Aorta (tissue), 5 donors: ENCODE measurements at regions of chr2 and their contacts with region 1.

Region 1: GRCh38 chr2:222613715-222614331 is 42.1 kb downstream of the FARSB start:
- DNase-seq: no peak
- ATAC-seq: peak; percentile 67
- H3K4me3 ChIP-seq: no peak overlapping the region
- H3K27ac ChIP-seq: no peak overlapping the region
- H3K4me1 ChIP-seq: peaks cover 0 to 4% of the 10 kb centered on the region in 2 donors
- H3K27me3 ChIP-seq: no peaks in the 10 kb centered on the region

Region 2: DNA sequence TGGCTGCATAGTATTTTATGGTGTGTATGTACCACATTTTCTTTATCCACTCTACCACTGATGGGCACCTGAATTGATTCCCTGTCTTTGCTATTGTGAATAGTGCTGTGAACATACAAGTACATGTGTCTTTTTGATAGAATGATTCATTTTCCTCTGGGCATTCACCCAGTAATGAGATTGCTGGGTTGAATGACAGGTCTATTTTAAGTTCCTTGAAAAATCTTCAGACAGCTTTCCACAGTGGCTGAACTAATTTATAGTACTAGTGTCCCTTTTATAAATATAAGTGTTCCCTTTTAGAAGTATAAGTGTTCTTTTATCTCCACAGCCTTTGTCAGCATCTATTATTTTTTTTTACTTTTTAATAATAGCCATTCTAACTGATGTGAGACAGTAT is 737.8 kb before region 1 on chr2:
- intact Hi-C with region 1: no loop called
- DNase-seq: no peak
- ATAC-seq: no peak
- H3K4me3 ChIP-seq: no peak overlapping the region
- H3K27ac ChIP-seq: no peak overlapping the region
- H3K4me1 ChIP-seq: no peaks in the 10 kb centered on the region
- H3K27me3 ChIP-seq: no peaks in the 10 kb centered on the region

Region 3: DNA sequence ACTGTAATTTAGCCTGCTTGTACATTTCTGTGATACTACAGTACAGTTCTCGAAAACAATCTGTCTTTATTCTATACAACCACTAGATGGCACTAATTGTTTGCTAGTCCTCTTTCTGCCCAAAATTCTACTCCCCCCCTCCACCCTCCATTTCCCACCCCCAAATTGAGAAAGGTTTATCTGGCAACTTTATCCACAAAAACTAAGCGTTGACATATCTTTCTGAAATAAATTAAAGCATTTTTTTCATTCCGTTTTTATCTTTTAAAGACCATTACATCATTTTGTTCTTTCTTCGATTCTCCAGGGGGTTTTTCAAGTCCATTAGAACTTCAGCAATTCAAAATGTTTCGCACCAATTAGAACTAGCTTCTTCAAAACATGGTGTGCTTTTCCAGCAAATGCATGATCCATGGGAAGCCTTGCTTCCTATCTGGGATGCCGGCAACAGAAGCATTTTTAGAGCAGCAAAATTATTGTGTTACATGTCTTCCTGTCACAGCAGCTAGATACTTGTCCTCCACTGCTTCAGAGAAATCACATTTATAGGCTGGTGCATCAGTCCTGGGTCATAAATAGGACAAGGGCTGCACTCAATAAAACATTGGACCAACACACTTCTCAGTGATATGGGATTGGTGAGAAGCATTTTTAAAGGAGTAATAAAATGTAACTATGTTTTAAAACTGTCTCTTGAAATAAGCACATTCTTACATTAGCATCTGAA is 556.3 kb before region 1 on chr2:
- intact Hi-C with region 1: loop called in 1 of 2 experiments (anchors 5 kb)
- DNase-seq: no peak
- ATAC-seq: peak; percentile 76
- H3K4me3 ChIP-seq: no peak overlapping the region
- H3K27ac ChIP-seq: no peak overlapping the region
- H3K4me1 ChIP-seq: no peaks in the 10 kb centered on the region
- H3K27me3 ChIP-seq: no peaks in the 10 kb centered on the region

Region 4: GRCh38 chr2:222561817-222562645 is 51.8 kb before region 1 on chr2:
- intact Hi-C with region 1: no loop called
- DNase-seq: no peak
- ATAC-seq: no peak
- H3K4me3 ChIP-seq: no peak overlapping the region
- H3K27ac ChIP-seq: no peak overlapping the region
- H3K4me1 ChIP-seq: no peaks in the 10 kb centered on the region
- H3K27me3 ChIP-seq: no peaks in the 10 kb centered on the region

Region 5: DNA sequence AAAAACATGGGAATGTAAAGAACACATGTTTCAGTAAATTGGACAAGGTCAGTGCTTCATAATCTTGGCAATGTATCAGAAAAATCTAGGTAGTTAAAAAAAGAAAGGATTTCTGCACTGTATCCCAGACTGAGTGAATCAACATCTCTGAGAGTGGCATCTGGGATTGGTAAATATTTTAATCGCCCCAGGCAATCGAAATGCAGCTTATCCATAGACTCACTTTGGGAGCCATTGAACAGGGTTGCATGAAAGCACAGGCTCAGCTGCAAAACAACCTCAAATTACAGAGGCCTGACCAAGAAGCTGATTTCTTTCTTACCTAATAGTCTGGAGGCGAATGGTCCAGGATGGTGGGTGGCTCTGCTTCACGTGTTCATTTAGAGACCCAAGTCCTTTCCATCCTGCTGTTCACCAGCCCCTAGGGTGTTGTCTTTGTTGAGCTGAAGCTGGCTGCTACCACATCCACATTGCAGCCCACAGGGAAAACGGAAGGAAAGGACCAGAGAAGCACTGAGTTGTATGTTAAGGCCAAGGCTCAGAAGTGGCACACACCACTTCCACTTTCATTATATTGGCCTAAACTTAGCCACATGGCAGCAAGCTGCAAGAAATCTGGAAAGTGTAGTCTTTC is 116.7 kb after region 1 on chr2:
- intact Hi-C with region 1: no loop called
- DNase-seq: no peak
- ATAC-seq: peak; percentile 28
- H3K4me3 ChIP-seq: no peak overlapping the region
- H3K27ac ChIP-seq: peak overlapping the region; percentile 61 to 93
- H3K4me1 ChIP-seq: peaks cover 11 to 15% of the 10 kb centered on the region in 2 donors
- H3K27me3 ChIP-seq: no peaks in the 10 kb centered on the region